Endothelial cell of umbilical vein (primary cell): ENCODE measurements at regions of chr7 and their contacts with region 1.

Region 1: GRCh38 chr7:111138196-111138569 is 47.3 kb downstream of the LRRN3 start:
- DNase-seq: peak; percentile 83
- H3K4me3 ChIP-seq: no peak overlapping the region
- H3K27ac ChIP-seq: peak overlapping the region; percentile 86
- H3K4me1 ChIP-seq: peaks cover 20% of the 10 kb centered on the region
- H3K27me3 ChIP-seq: no peaks in the 10 kb centered on the region
- CTCF ChIP-seq: no peak
- POLR2A ChIP-seq: no peak

Region 2: GRCh38 chr7:110317541-110318275 is 820.5 kb before region 1 on chr7:
- CTCF ChIA-PET with region 1: no interaction called
- POLR2A ChIA-PET with region 1: no interaction called
- dilution Hi-C with region 1: no loop called
- intact Hi-C with region 1: loop called (anchors 1 kb)
- DNase-seq: peak; percentile 96
- H3K4me3 ChIP-seq: no peak overlapping the region
- H3K27ac ChIP-seq: peak overlapping the region; percentile 27
- H3K4me1 ChIP-seq: peaks cover 20% of the 10 kb centered on the region
- H3K27me3 ChIP-seq: no peaks in the 10 kb centered on the region
- CTCF ChIP-seq: no peak
- POLR2A ChIP-seq: no peak

Region 3: GRCh38 chr7:111126987-111127386 is 11.2 kb before region 1 on chr7:
- CTCF ChIA-PET with region 1: interaction called, 15 read pairs
- POLR2A ChIA-PET with region 1: no interaction called
- dilution Hi-C with region 1: no loop called
- intact Hi-C with region 1: no loop called
- DNase-seq: peak; percentile 9
- H3K4me3 ChIP-seq: no peak overlapping the region
- H3K27ac ChIP-seq: no peak overlapping the region
- H3K4me1 ChIP-seq: no peaks in the 10 kb centered on the region
- H3K27me3 ChIP-seq: no peaks in the 10 kb centered on the region
- CTCF ChIP-seq: no peak
- POLR2A ChIP-seq: no peak